ENCODE measurements at regions of chr1 and their contacts with region 1.

Region 1: GRCh38 chr1:109112652-109113285 is 1.1 kb upstream of the ELAPOR1 start:
- DNase-seq: peak; percentile 91
- ATAC-seq: peak; percentile 63
- H3K4me3 Mint-ChIP-seq: peak overlapping the region; percentile 72
- H3K27ac Mint-ChIP-seq: peak overlapping the region; percentile 58
- H3K4me1 Mint-ChIP-seq: peaks cover 33% of the 10 kb centered on the region
- H3K27me3 Mint-ChIP-seq: peaks cover 26% of the 10 kb centered on the region

Region 2: DNA sequence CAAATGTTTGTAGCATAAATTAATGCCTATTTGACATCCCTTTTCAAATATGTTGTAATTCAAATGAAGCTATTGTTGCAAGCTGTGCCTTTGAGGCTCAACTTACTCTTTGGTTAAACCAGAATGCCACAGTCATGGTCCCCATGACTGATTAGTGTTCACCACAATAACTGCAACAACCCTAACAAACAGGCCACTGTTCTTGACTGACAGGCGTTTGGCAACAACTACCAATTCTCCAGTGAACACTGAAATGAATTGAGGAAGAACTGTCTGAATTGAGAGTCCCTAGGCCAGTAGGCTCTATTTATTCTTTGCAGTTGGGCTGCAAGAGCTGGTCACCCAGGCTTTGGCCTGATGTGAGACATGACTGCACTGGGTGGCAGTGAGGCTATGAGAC is 28.8 kb before region 1 on chr1:
- CTCF ChIA-PET with region 1: interaction called, 14 read pairs
- POLR2A ChIA-PET with region 1: no interaction called
- DNase-seq: no peak
- ATAC-seq: no peak
- H3K4me3 Mint-ChIP-seq: no peak overlapping the region
- H3K27ac Mint-ChIP-seq: peak overlapping the region; percentile 55
- H3K4me1 Mint-ChIP-seq: peaks cover 11% of the 10 kb centered on the region
- H3K27me3 Mint-ChIP-seq: no peaks in the 10 kb centered on the region

Region 3: DNA sequence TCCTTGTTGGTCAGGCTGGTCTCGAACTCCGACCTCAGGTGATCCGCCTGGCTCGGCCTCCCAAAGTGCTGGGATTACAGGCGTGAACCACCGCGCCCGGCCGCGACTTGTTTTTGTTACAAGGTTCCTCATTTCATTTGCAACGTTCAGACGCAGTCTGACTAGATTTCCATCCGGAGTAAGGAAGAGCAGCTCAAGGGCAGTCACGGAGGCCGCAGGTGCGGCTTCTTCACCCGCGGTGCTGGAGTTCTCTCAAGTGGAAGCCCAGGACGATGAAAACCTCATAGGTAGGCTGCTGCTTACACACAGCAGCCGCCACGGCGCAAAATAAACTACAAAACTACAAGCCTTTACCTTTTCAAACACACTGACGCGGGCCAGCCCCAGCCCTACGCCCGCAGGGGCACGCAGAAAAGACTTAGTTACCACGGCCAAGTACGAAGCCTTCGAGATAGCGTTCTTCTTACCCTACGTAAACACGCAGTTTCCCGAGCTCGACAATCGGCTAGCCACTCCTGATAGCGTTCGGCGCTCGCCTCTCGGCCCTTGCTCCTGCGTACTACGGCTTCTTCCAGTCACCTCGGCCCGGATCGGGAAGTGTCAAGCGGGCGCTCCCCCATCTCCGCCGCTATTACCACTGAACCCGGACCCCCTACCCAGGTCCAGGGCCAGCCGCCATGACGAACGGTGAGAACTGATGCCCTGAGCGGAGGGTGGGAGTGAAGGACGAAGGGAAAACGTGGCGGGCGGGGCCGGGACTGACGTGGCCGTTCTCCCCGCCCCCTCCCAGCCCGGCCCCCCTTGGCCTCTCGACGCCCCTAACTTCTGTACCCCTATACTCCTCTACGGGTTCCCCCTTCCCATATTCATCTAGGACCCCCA is 22.3 kb before region 1 on chr1 and contains the start of gene TMEM167B:
- CTCF ChIA-PET with region 1: interaction called, 16 read pairs
- POLR2A ChIA-PET with region 1: no interaction called
- DNase-seq: peak; percentile 93
- ATAC-seq: peak; percentile 92
- H3K4me3 Mint-ChIP-seq: peak within 1 kb of the TSS; percentile 88
- H3K27ac Mint-ChIP-seq: peak within 1 kb of the TSS; percentile 95
- H3K4me1 Mint-ChIP-seq: peaks cover 33% of the 10 kb centered on the region
- H3K27me3 Mint-ChIP-seq: no peaks in the 10 kb centered on the region
- total RNA-seq, gene TMEM167B: 20.8 to 21.2 TPM

Region 4: DNA sequence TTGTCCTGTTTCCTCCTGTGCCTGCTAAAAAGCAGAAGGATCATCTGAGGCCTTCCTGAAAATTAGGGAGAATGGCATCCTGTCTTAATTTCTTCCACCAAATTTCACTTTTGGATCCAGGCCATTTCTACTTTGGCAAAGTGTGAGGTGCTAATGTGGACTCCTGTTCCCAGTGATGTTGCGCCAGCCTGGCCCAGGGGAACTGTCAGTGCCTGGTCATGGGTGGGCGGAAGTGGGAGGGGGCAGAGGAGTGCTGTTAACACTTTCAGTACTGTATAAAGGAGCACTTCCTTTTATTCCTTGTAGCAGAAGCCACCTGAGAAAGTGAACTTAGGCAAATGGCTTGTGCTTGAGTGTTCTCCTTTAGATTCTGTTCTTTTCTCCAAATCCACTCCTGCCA is 21.0 kb after region 1 on chr1:
- CTCF ChIA-PET with region 1: interaction called, 30 read pairs
- POLR2A ChIA-PET with region 1: no interaction called
- DNase-seq: no peak
- ATAC-seq: no peak
- H3K4me3 Mint-ChIP-seq: no peak overlapping the region
- H3K27ac Mint-ChIP-seq: no peak overlapping the region
- H3K4me1 Mint-ChIP-seq: peaks cover 10% of the 10 kb centered on the region
- H3K27me3 Mint-ChIP-seq: no peaks in the 10 kb centered on the region

Region 5: GRCh38 chr1:109193653-109194590 is 81.2 kb after region 1 on chr1:
- CTCF ChIA-PET with region 1: interaction called, 20 read pairs
- POLR2A ChIA-PET with region 1: no interaction called
- DNase-seq: peak; percentile 74
- ATAC-seq: peak; percentile 85
- H3K4me3 Mint-ChIP-seq: no peak overlapping the region
- H3K27ac Mint-ChIP-seq: no peak overlapping the region
- H3K4me1 Mint-ChIP-seq: peaks cover 8% of the 10 kb centered on the region
- H3K27me3 Mint-ChIP-seq: no peaks in the 10 kb centered on the region

Measured in activated CD8-positive, alpha-beta T cell treated with anti-CD3 and anti-CD28 coated beads, Interleukin-2, amount 10 ng/mL, durations not matched to agents 7 days and 5 days (primary cell).